HEK293 (cell line): ENCODE measurements at regions of chr3 and their contacts with region 1.

Region 1: GRCh38 chr3:44624749-44625480 is at the start of gene ZNF197:
- H3K4me3 ChIP-seq: peak within 1 kb of the TSS; percentile 62
- H3K27ac ChIP-seq: peak within 1 kb of the TSS; percentile 42; the same call in 1 of the 2 replicates
- H3K4me1 ChIP-seq: no peaks in the 10 kb centered on the region
- CTCF ChIP-seq: no peak

Region 2: GRCh38 chr3:44648564-44649229 is 23.8 kb after region 1 on chr3 and contains the start of gene ZNF35:
- CTCF ChIA-PET with region 1: interaction called, 5 read pairs
- POLR2A ChIA-PET with region 1: interaction called, 21 read pairs
- H3K4me3 ChIP-seq: peak within 1 kb of the TSS; percentile 95
- H3K27ac ChIP-seq: peak within 1 kb of the TSS; percentile 26; the same call in 1 of the 2 replicates
- H3K4me1 ChIP-seq: no peaks in the 10 kb centered on the region
- CTCF ChIP-seq: no peak